Ascending aorta (tissue), 2 donors: ENCODE measurements at regions of chr17 and their contacts with region 1.

Region 1: GRCh38 chr17:77429919-77430752 is 289.4 kb downstream of the SEC14L1 start:
- DNase-seq: peak; percentile 90 to 98
- H3K4me3 ChIP-seq: no peak overlapping the region
- H3K27ac ChIP-seq: peak overlapping the region; percentile 79 to 81
- H3K4me1 ChIP-seq: peaks cover 32 to 50% of the 10 kb centered on the region in 2 donors
- H3K27me3 ChIP-seq: no peaks in the 10 kb centered on the region
- CTCF ChIP-seq: peak; percentile 85 to 93 (median 85)

Region 2: GRCh38 chr17:77331301-77331864 is 98.8 kb before region 1 on chr17:
- intact Hi-C with region 1: loop called (anchors 1 kb)
- DNase-seq: peak; percentile 74 to 97
- H3K4me3 ChIP-seq: peak overlapping the region in 1 of 2 donors; percentile 25
- H3K27ac ChIP-seq: no peak overlapping the region
- H3K4me1 ChIP-seq: peaks cover 0 to 6% of the 10 kb centered on the region in 2 donors
- H3K27me3 ChIP-seq: no peaks in the 10 kb centered on the region
- CTCF ChIP-seq: peak; percentile 92 to 99 (median 94)

Region 3: DNA sequence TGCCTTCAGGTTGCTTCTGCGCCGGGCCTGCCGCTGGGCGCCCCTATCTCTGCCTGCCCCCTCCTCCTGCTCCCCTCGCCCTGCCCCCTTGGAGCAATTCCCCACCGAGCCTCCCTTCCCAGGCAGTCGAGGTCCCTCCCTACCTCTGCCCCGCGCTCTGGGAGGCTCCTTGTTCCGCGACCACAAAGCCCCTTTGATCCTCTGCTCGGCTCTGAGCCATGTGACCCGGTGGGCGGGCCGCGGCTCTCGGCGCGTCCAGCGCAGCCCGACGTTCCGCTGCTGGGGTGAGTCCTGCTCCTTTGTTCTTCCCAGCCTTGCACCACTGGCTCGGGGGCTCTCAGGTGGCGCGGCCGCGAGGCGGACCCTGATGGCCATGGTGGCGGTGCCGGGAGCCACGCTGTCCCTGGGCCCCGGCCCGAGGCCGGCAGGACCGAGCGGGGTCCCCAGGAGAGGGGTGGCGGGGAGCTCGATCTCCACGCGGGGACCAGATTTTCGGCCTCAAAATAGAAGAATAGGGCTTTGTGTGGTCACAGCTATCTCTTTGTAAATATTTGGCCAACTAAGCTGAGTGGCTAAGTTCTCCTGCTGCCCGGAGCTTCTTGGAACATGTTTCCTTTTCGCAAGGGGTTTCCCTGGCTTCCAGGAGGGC is 21.2 kb after region 1 on chr17:
- intact Hi-C with region 1: loop called (anchors 2 kb)
- DNase-seq: peak in 1 of 2 donors; percentile 75
- H3K4me3 ChIP-seq: peak overlapping the region; percentile 31 to 71
- H3K27ac ChIP-seq: peak overlapping the region; percentile 50 to 72
- H3K4me1 ChIP-seq: peaks cover 15 to 18% of the 10 kb centered on the region in 2 donors
- H3K27me3 ChIP-seq: no peaks in the 10 kb centered on the region
- CTCF ChIP-seq: no peak

Region 4: GRCh38 chr17:77462101-77462500 is 32.0 kb after region 1 on chr17:
- intact Hi-C with region 1: no loop called
- DNase-seq: no peak
- H3K4me3 ChIP-seq: no peak overlapping the region
- H3K27ac ChIP-seq: no peak overlapping the region
- H3K4me1 ChIP-seq: no peaks in the 10 kb centered on the region
- H3K27me3 ChIP-seq: no peaks in the 10 kb centered on the region
- CTCF ChIP-seq: no peak

Region 5: DNA sequence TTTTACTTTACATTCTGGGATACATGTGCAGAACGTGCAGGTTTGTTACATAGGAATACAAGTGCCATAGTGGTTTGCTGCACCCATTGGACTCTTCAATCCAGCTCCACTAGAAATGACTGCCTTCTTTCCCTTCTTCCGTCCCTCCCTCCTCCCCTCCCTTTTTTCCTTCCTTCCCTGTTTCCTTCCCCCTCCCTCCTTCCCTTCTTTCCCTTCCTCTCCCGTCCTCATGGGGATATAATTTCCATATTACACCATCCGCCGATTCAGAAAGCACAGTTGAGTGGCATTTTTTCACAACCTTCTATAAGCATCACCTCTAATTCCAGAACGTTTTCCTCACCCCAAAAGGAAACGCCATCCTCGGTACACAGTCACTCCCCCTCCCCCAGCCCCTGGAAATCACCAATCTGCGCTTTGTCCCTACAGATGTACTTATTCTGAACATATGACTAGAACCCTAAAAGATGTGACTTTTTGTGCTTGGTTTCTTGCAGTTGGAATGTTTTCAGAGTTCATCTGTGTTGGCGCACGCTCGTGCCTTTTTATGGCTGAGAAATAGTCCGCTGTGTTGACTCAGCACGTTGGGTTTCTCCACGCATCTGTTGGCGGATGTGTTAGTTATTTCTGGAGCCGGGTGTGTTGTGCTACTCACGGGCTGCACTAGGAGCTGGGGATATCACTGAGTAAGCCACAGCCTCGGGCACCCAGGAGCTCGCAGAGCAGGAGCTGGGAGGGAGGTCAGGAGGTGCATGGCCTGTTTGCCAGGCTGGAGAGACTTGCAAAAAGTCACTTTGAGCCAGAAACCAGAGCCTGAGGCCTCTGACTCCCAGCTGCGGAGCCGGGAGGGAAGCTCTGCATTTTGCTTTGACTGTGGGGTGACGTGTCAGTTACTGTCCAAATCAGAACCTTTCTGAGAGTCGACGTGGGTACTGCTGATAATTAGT is 47.1 kb after region 1 on chr17:
- intact Hi-C with region 1: loop called (anchors 1 kb)
- DNase-seq: peak; percentile 73 to 96
- H3K4me3 ChIP-seq: peak overlapping the region in 1 of 2 donors; percentile 14
- H3K27ac ChIP-seq: peak overlapping the region; percentile 84 to 92
- H3K4me1 ChIP-seq: peaks cover 21 to 48% of the 10 kb centered on the region in 2 donors
- H3K27me3 ChIP-seq: no peaks in the 10 kb centered on the region
- CTCF ChIP-seq: peak in 1 of 3 experiments; percentile 12

Region 6: GRCh38 chr17:77494664-77495435 is 64.7 kb after region 1 on chr17:
- intact Hi-C with region 1: loop called (anchors 1 kb)
- DNase-seq: peak in 1 of 2 donors; percentile 88
- H3K4me3 ChIP-seq: no peak overlapping the region
- H3K27ac ChIP-seq: peak overlapping the region in 1 of 2 donors; percentile 5
- H3K4me1 ChIP-seq: peaks cover 7 to 12% of the 10 kb centered on the region in 2 donors
- H3K27me3 ChIP-seq: no peaks in the 10 kb centered on the region
- CTCF ChIP-seq: peak; percentile 95 to 99 (median 96)

Region 7: GRCh38 chr17:77734341-77735080 is 304.4 kb after region 1 on chr17:
- intact Hi-C with region 1: loop called (anchors 10 kb)
- DNase-seq: peak; percentile 45 to 94
- H3K4me3 ChIP-seq: peak overlapping the region in 1 of 2 donors; percentile 47
- H3K27ac ChIP-seq: peak overlapping the region; percentile 85 to 87
- H3K4me1 ChIP-seq: peaks cover 21 to 44% of the 10 kb centered on the region in 2 donors
- H3K27me3 ChIP-seq: no peaks in the 10 kb centered on the region
- CTCF ChIP-seq: peak in 1 of 3 experiments; percentile 29